ENCODE measurements at regions of chr7 and their contacts with region 1.

Region 1: DNA sequence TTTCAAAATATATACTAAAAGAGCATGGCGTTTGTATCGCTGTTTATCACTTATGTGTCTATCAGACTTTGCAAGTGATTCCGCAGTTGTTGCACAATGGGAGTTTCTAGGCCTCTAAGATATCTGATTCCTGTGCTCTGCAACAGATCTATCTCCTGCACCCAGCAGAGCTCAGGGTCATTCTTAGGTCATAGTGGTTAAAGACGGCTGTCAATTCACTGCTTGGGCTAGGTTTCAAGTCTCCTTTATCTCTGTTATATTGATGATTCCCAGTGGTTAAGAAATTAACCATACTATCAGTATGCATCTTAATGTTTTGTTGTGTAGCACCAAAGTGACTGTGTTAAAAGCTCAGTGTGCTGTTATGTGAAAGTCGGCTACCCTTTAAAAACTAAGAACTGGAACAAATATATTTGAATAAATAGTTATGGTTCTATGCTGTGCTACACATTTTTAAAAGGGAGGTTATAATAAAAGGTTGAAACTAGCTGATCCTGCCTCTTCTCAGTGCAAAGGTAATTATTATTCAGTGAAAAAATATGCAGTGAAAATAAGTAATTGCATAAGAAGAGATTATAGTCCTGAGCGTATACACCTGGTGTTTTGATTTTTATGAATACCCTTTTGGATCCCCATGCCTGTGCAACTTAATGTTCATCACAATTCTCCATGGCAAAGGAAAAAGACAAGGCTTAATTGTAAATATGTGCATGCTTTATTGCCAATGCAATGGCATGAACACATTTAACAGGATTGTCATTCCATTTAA is 24.0 kb downstream of the HOXA1 start:
- DNase-seq: peak in 2 of 35 experiments; percentile 7 to 17
- ATAC-seq: no peak
- H3K4me3 ChIP-seq: no peak overlapping the region
- H3K4me3 Mint-ChIP-seq: no peak overlapping the region
- H3K27ac ChIP-seq: no peak overlapping the region
- H3K27ac Mint-ChIP-seq: no peak overlapping the region
- H3K4me1 ChIP-seq: no peaks in the 10 kb centered on the region
- H3K4me1 Mint-ChIP-seq: peaks cover 0 to 3% (median 1%) of the 10 kb centered on the region in 3 donors
- H3K27me3 ChIP-seq: peaks cover 0 to 2% of the 10 kb centered on the region in 2 experiments
- H3K27me3 Mint-ChIP-seq: peaks cover 11 to 22% of the 10 kb centered on the region in 2 donors

Region 2: GRCh38 chr7:26853788-26854393 is 217.9 kb before region 1 on chr7:
- CTCF ChIA-PET with region 1: no interaction called
- POLR2A ChIA-PET with region 1: interaction called in 1 of 2 experiments, 11 read pairs
- DNase-seq: peak in 1 of 35 experiments; percentile 46
- ATAC-seq: peak in 1 of 4 experiments; percentile 47
- H3K4me3 ChIP-seq: no peak overlapping the region
- H3K4me3 Mint-ChIP-seq: no peak overlapping the region
- H3K27ac ChIP-seq: no peak overlapping the region
- H3K27ac Mint-ChIP-seq: no peak overlapping the region
- H3K4me1 ChIP-seq: peaks cover 0 to 6% of the 10 kb centered on the region in 2 experiments
- H3K4me1 Mint-ChIP-seq: peaks cover 7 to 15% (median 9%) of the 10 kb centered on the region in 3 donors
- H3K27me3 ChIP-seq: peaks cover 0 to 10% of the 10 kb centered on the region in 2 experiments
- H3K27me3 Mint-ChIP-seq: peaks cover 21 to 41% of the 10 kb centered on the region in 2 donors